ENCODE measurements at regions of chr11 and their contacts with region 1.

Region 1: DNA sequence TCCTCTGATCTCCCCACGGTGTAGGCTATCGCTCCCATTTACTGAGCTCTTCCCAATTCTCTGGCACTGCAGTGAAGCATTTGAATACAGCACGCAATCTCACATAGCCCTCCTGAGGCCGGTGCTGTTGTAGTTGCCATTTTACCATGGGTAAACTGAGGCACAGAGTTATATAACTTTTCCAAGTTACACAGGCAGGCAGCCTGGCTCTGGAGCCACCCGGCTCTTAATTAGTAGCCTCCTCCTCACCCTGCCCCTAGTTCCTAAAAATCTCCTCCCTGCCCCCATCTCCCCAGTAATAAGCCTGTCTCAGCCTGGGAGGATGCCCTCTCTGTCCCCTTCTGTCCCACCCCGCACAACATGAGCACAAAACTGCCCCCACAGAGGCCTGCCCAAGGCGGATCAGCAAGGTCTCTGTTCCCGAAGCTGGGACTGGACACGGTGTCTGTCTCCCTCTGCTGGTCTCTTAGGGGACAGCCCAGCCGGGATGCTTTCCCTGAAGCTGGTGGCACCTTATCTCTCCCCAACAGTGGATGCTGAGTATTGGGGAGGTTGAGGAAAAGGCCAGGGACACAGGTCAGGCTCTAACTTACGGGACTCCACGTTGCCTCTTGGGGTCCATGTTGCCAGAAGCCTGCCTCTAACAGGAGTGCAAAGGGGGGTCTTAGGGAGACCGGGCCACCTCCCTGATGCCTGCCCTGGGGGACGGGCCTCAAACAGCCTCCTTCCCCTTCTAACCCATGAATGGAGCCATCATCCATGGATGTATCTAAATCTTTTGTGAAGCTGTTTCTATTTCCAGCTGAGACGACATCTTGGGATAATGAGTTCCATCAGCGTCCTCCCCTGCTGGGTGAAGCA is 9.1 kb upstream of the CLCF1 start:
- DNase-seq: peak; percentile 86
- CTCF ChIP-seq: peak; percentile 94

Region 2: DNA sequence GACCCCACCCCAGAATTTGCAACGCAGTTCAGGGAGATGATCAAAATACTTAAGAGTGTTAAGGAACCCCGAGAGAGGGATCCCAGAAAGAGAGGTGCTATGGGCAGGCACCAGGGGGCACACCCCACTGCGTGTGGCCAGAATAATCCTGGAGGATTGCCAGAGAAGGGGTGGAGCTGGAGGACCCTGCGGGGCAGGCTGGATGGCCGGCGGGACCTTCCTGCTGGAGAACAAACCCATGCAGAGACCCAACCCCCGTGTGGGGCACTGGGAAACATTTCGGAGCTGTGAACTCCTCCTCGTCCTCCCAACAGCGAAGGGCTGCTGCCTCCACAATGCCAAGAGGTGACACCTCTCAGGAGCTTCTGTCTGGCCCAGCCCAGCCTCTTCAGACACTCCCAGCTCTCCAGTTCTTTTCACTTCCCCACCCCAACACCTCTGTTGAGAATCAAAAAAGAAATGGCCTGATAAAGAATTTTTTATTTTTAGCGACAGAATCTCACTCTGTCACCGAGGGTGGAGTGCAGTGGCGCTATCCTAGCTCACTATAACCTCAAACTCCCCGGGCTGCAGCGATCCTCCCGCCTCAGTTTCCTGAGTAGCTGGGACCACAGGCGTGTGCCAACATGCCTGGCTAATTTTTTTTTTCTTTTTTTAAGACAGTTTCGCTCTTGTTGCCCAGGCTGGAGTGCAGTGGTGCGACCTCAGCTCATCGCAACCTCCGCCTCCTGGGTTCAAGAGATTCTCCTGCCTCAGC is 300.3 kb before region 1 on chr11:
- CTCF ChIA-PET with region 1: interaction called, 24 read pairs
- POLR2A ChIA-PET with region 1: no interaction called
- DNase-seq: no peak
- CTCF ChIP-seq: no peak

Region 3: DNA sequence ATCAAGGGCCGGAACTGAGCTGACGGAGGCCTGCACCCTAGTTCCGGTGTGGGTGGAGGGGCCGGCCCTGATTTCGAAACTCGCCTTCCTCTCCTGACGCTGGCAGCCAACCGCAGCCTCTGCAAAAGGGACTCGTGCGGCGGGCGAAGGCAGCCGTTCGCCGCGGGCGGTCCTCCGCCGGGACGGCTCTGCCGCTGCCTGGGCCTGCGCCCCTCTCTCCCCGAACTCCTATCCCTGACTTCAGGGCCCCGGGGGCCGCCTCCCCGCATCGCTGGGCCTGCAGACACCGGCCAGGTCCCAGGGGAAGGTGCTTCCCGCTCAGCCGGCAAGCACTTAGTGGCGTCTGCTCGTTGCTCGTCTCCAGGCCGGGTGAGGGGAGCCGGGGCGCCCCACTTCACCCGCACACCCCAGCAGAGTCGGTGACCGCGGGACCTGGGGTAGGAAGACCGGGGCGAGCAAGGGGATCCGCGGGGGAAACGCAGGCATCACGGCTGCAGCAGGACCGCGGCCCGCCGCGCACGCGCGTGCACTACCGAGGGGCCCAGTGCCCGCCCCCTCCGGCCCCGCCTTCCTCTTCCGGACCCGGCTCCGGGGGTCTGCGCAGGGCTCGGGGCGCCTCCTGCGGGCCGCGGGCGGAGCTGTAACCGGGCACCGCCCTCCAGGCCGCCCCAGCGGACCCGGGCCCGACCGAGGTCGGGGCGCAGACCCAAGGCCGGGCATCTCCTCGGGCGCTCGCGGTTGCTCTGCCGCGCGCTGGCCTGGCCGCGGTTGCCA is 93.9 kb before region 1 on chr11:
- CTCF ChIA-PET with region 1: interaction called, 10 read pairs
- POLR2A ChIA-PET with region 1: no interaction called
- DNase-seq: peak; percentile 91
- CTCF ChIP-seq: peak; percentile 47

Region 4: DNA sequence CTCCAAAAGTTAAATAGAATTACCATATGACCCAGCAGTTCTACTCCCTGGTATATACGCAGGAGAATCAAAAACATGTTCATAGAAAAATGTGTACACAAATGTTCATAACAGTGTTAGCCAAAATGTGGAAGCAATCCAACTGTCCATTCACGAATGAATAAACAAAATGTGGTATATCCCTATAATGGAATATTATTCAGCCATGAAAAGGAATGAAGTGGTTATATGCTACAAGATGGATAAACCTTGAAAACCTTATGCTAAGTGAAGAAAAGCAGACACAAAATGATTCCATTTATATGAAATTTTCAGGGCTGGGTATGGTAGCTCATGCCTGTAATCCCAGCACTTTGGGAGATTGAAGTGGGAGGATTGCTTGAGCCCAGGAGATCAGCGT is 45.2 kb before region 1 on chr11:
- CTCF ChIA-PET with region 1: interaction called, 17 read pairs
- POLR2A ChIA-PET with region 1: interaction called, 5 read pairs
- DNase-seq: no peak
- CTCF ChIP-seq: no peak

Region 5: GRCh38 chr11:67409261-67409666 is 26.8 kb after region 1 on chr11:
- CTCF ChIA-PET with region 1: interaction called, 1,573 read pairs
- POLR2A ChIA-PET with region 1: no interaction called
- DNase-seq: peak; percentile 75
- CTCF ChIP-seq: no peak

Measured in GM10248 (cell line).